Activated CD4-positive, alpha-beta memory T cell treated with anti-CD3 and anti-CD28 coated beads for 36 hours (primary cell): ENCODE measurements at regions of chr12 and their contacts with region 1.

Region 1: DNA sequence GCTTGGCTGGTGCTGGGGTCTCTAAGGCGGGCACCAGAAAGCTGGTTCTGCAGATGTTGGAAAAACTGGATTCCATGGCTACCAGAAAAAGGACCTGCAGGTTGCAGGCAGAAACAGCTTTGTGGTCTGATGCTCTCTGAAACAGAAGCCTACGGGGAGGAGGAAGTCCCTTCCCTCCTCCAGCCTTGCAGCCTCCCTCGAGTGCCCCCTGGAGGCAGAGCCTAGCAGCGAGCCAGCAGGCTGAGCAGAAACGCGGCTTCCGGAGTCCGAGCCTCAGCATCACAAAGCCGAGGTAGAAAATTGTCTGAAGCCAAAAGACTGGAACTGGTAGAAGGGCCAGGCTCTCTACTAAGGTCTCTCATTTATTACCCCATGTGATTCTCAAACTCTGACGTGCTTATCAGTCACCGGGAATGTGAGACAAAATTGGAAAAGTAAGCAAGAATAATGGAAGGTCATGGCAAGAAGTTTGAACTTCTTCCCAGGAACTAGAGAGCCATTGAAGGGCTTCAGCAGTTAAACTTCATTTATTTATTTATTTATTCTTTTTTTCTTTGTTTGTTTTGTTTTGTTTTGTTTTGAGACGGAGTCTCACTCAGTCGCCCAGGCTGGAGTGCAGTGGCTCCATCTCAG is 82.2 kb upstream of the CPSF6 start:
- DNase-seq: peak; percentile 95
- H3K4me3 Mint-ChIP-seq: peak overlapping the region; percentile 52
- H3K27ac Mint-ChIP-seq: no peak overlapping the region
- H3K4me1 Mint-ChIP-seq: peaks cover 39% of the 10 kb centered on the region
- H3K27me3 Mint-ChIP-seq: no peaks in the 10 kb centered on the region

Region 2: DNA sequence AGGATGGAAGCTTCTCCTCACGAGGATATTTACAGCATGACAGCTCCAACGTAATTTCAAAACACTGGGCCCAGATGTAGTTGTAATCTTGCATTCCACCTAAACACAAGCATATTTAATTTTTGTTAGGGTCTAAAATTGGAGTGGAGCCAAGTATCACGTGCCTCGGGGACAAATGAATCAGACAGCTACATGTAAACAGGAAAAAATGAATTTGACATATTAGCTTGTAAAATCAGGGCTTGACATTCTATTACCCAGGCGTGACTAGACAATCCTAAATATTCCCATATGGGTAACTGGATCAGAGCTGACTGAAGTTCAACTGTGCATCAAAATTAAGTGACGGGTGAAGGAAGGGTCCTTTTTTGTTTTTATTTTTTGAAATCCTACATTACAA is 290.2 kb before region 1 on chr12:
- CTCF ChIA-PET with region 1: interaction called, 3 read pairs
- POLR2A ChIA-PET with region 1: no interaction called
- intact Hi-C with region 1: loop called (anchors 10 kb)
- DNase-seq: no peak
- H3K4me3 Mint-ChIP-seq: no peak overlapping the region
- H3K27ac Mint-ChIP-seq: no peak overlapping the region
- H3K4me1 Mint-ChIP-seq: no peaks in the 10 kb centered on the region
- H3K27me3 Mint-ChIP-seq: no peaks in the 10 kb centered on the region

Region 3: DNA sequence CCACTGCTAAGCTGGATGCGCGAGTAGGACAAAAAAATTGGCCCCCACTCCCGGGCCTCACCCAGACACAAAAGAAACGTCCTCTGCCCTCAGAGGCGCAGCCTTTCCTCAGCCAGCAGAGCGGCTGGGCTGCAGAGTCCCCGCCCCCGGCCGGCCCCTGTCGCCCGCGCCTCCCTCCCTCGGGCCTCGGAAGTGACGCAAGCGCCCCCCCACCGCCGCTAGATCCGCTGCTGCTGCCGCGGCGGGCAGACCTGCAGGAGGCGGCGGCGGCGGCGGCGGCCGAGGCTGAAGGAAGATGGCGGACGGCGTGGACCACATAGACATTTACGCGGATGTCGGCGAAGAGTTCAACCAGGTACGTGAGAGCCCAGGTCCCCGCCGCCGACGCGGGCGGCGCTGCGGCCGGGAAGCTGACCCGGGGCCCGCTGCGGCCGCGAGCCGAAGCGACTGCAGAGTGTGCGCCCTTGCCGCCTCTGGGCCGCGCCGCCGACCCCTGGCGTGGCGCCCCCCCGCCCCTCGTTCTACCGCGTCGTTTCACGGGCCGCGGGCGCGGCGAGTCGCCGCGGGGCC is 82.3 kb after region 1 on chr12 and contains the start of gene CPSF6:
- CTCF ChIA-PET with region 1: interaction called, 16 read pairs
- POLR2A ChIA-PET with region 1: interaction called, 10 read pairs
- intact Hi-C with region 1: loop called (anchors 1 kb)
- DNase-seq: peak; percentile 98
- H3K4me3 Mint-ChIP-seq: peak within 1 kb of the TSS; percentile 96
- H3K27ac Mint-ChIP-seq: peak within 1 kb of the TSS; percentile 99
- H3K4me1 Mint-ChIP-seq: peaks cover 46% of the 10 kb centered on the region
- H3K27me3 Mint-ChIP-seq: no peaks in the 10 kb centered on the region
- total RNA-seq, gene CPSF6: 86.6 to 90.0 TPM

Region 4: DNA sequence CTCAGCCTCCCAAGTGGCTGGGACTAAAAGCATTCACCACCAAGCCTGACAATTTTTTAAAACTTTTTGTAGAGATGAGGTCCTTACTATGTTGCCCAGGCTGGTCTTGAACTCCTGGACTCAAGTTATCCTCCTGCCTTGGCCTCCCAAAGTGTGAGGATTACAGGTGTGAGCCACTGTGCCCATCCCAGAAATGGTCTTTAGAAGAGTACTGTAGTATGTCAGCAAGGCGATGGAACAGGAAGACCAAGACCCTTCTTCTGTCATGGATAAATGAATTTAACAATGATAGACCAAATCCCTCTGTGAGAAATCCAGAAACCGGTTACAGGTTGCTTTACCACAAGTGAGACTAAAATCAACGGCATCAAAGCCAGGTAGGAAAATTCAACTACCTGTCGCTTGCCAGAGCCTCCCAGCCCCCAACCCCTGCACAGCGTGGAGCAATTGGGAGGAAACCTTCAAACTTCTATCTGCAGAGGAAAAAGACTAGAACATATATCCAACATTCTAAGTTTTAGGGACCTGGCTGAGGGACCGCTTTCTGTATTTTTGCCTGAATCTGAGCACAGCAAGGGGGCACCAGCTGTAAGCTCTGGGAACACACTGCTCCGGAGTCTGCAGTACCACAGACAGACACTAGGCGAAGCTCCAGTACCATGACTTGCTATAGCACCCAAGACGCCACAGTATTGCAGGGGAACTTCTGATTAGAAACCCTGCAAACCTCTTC is 133.6 kb after region 1 on chr12:
- CTCF ChIA-PET with region 1: interaction called, 8 read pairs
- POLR2A ChIA-PET with region 1: no interaction called
- intact Hi-C with region 1: loop called (anchors 1 kb)
- DNase-seq: peak; percentile 87
- H3K4me3 Mint-ChIP-seq: no peak overlapping the region
- H3K27ac Mint-ChIP-seq: no peak overlapping the region
- H3K4me1 Mint-ChIP-seq: peaks cover 7% of the 10 kb centered on the region
- H3K27me3 Mint-ChIP-seq: peaks cover 15% of the 10 kb centered on the region

Region 5: DNA sequence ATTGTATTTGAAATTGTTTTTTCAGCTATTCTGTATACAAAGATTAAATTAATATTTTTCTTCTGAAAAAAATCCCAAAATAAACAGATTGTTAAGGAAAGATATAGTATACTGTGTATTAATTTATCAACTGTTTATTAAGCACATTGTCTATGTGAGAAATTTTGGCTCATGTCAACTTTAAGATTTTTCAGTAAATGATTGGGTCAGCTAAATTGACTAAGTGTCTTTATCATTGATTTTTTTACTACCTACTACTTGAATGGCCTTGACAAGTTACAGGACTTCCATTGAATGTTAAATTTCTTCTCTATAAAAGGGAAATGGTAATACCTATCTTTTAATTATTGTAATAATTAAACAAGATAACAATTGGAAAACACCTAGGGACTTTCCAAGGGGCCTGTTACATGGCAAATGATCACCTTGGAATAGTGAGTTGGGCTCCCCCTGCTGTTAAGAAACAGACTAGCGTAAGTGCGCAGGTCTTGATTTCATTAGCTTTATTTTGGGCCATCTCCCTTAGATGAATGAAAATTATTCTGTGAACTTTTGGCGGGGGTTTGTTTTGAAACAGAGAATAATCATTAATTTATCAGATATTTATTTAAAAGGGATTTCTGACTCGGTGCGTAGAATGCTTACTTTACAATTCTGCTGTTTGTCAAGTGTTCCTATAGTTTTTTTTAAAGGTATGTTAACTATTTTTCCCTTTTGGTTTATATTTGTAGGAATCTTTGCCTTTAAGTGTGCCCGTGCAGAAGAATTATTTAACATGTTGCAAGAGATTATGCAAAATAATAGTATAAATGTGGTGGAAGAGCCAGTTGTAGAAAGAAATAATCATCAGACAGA is 413.6 kb after region 1 on chr12:
- CTCF ChIA-PET with region 1: interaction called, 5 read pairs
- POLR2A ChIA-PET with region 1: no interaction called
- intact Hi-C with region 1: loop called (anchors 2 kb)
- DNase-seq: peak; percentile 54
- H3K4me3 Mint-ChIP-seq: no peak overlapping the region
- H3K27ac Mint-ChIP-seq: no peak overlapping the region
- H3K4me1 Mint-ChIP-seq: peaks cover 9% of the 10 kb centered on the region
- H3K27me3 Mint-ChIP-seq: no peaks in the 10 kb centered on the region

Region 6: GRCh38 chr12:69639400-69640016 is 482.4 kb after region 1 on chr12:
- CTCF ChIA-PET with region 1: interaction called, 4 read pairs
- POLR2A ChIA-PET with region 1: no interaction called
- intact Hi-C with region 1: loop called (anchors 5 kb)
- DNase-seq: peak; percentile 73
- H3K4me3 Mint-ChIP-seq: no peak overlapping the region
- H3K27ac Mint-ChIP-seq: no peak overlapping the region
- H3K4me1 Mint-ChIP-seq: no peaks in the 10 kb centered on the region
- H3K27me3 Mint-ChIP-seq: no peaks in the 10 kb centered on the region

Region 7: DNA sequence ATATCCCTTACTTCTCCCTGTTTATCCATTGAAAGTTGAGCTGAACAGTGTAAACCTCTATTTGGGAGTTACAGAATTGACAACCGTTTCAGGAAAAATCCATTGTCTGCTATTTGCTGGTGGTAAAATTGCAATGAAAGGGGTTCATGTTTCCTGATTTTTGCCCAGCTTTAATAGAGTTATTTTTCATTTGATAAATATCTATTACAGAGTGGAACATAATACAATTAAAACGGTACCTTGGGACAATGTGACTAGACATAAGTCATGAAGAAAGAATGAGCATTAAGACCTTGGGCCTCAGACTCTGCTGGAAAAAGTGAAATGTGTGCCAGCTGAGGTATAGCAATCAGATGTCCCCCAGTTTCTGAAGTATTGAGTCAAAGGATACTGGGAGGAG is 1750.3 kb after region 1 on chr12:
- CTCF ChIA-PET with region 1: no interaction called
- POLR2A ChIA-PET with region 1: no interaction called
- intact Hi-C with region 1: no loop called
- DNase-seq: no peak
- H3K4me3 Mint-ChIP-seq: no peak overlapping the region
- H3K27ac Mint-ChIP-seq: no peak overlapping the region
- H3K4me1 Mint-ChIP-seq: no peaks in the 10 kb centered on the region
- H3K27me3 Mint-ChIP-seq: no peaks in the 10 kb centered on the region